IMR-90 (cell line): ENCODE measurements at regions of chr9 and their contacts with region 1.

Region 1: DNA sequence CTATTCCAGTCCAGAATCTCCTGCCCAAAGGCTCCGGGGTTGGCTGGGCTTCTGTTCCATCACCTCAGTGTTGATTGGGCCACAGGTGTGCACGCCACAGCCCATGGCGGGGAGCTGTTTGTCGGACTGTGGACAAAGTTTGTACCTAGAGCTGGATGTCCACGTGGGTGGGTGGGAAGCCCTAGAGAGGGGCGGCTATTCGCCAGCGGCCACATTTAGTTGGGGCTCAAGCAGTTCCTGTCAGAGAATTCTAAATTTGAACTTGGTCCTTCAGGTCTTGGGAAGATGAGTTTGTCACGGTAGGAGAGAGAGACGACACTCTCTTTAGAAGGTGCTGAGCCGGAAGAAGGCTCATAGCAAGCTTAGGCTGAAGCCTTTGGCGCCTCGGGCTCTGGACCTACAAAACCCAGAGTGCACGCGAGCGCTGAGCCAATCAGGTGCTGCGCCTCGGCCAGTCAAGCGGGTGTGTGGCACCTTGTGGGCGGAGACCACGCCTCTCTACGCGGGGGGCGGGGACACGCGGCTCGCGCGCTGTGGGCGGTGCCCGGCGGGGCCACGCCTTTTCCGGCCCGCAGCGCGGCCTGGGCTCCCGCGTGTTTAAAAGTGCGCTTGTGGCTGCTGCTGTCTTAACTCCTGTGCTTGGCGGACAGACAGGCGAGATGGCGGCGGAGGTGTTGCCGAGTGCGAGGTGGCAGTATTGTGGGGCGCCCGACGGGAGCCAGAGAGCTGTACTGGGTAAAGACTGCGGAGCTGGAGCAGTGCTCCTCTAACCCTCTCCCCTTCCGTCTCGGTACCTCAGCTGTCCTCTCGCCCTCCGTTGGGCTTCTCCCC is at the start of gene POLR1E:
- DNase-seq: peak; percentile 89
- ATAC-seq: peak; percentile 91
- H3K4me3 ChIP-seq: peak within 1 kb of the TSS; percentile 77
- H3K27ac ChIP-seq: peak within 1 kb of the TSS; percentile 76
- H3K4me1 ChIP-seq: peaks cover 11% of the 10 kb centered on the region
- H3K27me3 ChIP-seq: peaks cover 4% of the 10 kb centered on the region; the same call in 1 of the 2 replicates
- CTCF ChIP-seq: no peak
- POLR2A ChIP-seq: peak; percentile 95
- RAD21 ChIP-seq: no peak
- total RNA-seq, gene POLR1E: 67.5 and 71.9 TPM in 2 replicates

Region 2: DNA sequence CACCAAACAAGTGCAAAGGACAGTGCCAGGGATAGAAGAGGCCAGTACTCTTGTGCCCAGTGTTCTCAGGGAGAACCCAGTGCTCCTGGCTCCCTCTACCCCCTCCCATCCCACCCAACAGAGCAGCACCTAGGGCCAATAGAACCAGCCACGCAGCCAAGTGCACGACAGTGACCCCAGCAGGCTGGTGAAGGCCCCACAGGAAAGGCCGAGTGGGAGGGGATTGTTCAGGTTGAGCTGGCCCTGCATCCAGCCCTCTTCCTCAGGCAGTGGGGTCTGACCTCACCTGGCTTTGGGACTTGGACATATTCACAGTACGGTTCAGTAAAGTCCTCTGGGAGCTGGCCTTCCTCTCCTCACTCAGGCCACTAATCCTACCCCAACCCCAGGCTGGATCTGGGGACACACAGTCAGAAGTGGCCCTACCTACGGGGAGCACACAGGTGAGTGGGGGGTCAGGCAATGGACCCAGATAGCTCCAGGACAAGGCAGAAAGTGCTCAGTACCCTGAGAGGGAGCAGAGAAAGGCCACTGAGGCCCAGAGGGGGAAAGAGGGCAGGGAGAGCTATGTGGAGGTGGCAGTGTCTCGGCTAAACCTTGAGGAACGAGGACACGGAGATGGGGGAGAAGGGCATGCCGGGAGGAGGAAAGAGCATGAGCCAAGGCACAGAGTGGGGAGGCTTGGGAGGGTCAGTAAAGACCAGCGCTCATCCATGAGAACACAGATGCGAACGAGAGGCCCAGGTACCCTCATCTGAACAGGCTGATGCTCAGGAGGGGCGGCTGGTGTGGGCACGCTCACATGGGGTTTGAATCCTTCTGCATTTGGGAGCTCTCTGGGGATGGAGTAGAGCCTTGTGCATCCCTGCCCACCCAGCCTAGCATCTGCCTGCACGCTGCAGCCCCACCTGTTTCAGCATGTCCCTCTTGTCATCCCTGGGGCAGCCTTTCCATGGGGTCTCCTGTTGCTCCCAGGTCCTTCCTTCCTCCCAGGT is 25.7 kb after region 1 on chr9:
- CTCF ChIA-PET with region 1: no interaction called
- POLR2A ChIA-PET with region 1: no interaction called
- dilution Hi-C with region 1: no loop called
- in situ Hi-C with region 1: no loop called
- intact Hi-C with region 1: no loop called
- DNase-seq: no peak
- ATAC-seq: peak; percentile 50
- H3K4me3 ChIP-seq: no peak overlapping the region
- H3K27ac ChIP-seq: no peak overlapping the region
- H3K4me1 ChIP-seq: no peaks in the 10 kb centered on the region
- H3K27me3 ChIP-seq: no peaks in the 10 kb centered on the region
- CTCF ChIP-seq: 0 out of 2 replicates have a peak, but pooled peaks have one; percentile 1
- POLR2A ChIP-seq: 0 out of 2 replicates have a peak, but pooled peaks have one; percentile 1
- RAD21 ChIP-seq: no peak

Region 3: DNA sequence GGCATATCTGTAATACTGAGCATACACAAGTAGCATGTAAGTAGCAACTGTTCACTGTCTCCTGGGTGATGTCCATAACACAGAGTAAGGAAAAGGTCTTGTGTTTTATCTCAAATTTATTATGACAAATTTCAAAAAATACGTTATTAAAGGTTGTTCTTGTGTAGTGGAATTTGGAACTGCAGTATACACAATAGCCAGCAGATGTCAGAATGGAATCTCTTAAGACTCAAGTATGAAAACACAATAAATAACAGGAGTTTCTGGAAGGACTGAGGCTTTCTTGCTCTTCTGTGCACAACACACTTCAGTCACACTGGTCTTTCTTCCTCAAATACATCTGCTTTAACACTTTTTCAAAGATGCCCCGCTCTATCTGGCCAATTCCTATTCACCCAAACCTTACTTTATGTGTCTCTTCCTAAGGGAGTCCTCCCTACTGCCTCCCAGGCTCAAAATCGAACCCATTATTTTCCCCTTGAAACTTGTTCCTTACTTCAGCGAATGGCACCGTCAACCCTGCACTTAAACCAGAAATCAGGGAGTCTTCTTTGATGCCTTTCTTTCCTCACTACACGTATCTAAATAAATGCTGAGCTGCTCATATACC is 97.0 kb after region 1 on chr9:
- CTCF ChIA-PET with region 1: no interaction called
- POLR2A ChIA-PET with region 1: no interaction called
- dilution Hi-C with region 1: no loop called
- in situ Hi-C with region 1: no loop called
- intact Hi-C with region 1: loop called (anchors 2 kb)
- DNase-seq: peak; percentile 86
- ATAC-seq: peak; percentile 93
- H3K4me3 ChIP-seq: no peak overlapping the region
- H3K27ac ChIP-seq: no peak overlapping the region
- H3K4me1 ChIP-seq: no peaks in the 10 kb centered on the region
- H3K27me3 ChIP-seq: no peaks in the 10 kb centered on the region
- CTCF ChIP-seq: peak; percentile 75
- POLR2A ChIP-seq: no peak
- RAD21 ChIP-seq: peak; percentile 70

Region 4: DNA sequence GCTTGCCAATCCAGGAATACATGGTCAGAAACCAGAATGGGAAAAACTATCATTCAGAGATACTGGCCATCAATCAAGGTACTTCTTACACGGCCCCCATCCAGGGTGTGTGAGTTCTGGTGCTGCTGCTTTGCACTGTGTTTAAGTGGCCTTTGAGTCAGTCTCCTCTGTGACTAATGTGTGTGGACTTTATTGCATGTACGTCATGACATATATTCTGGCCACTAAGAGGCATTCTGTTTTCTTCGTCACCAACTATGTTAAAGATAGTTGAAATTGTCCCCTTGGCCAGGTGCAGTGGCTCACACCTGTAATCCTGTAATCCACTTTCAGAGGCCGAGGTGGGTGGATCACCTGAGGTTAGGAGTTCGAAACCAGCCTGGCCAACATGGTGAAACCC is 290.7 kb after region 1 on chr9:
- CTCF ChIA-PET with region 1: no interaction called
- POLR2A ChIA-PET with region 1: no interaction called
- dilution Hi-C with region 1: no loop called
- in situ Hi-C with region 1: loop called (anchors 10 kb)
- intact Hi-C with region 1: no loop called
- DNase-seq: peak; percentile 80
- ATAC-seq: peak; percentile 76
- H3K4me3 ChIP-seq: no peak overlapping the region
- H3K27ac ChIP-seq: no peak overlapping the region
- H3K4me1 ChIP-seq: peaks cover 6% of the 10 kb centered on the region
- H3K27me3 ChIP-seq: no peaks in the 10 kb centered on the region
- CTCF ChIP-seq: no peak
- POLR2A ChIP-seq: no peak
- RAD21 ChIP-seq: no peak

Region 5: GRCh38 chr9:38026021-38026809 is 540.6 kb after region 1 on chr9:
- CTCF ChIA-PET with region 1: no interaction called
- POLR2A ChIA-PET with region 1: no interaction called
- dilution Hi-C with region 1: no loop called
- in situ Hi-C with region 1: no loop called
- intact Hi-C with region 1: loop called (anchors 2 kb)
- DNase-seq: peak; percentile 98
- ATAC-seq: peak; percentile 77
- H3K4me3 ChIP-seq: no peak overlapping the region
- H3K27ac ChIP-seq: peak overlapping the region; percentile 96
- H3K4me1 ChIP-seq: peaks cover 59% of the 10 kb centered on the region
- H3K27me3 ChIP-seq: no peaks in the 10 kb centered on the region
- CTCF ChIP-seq: no peak
- POLR2A ChIP-seq: no peak; the same call in 1 of the 2 replicates
- RAD21 ChIP-seq: peak; percentile 28

Region 6: DNA sequence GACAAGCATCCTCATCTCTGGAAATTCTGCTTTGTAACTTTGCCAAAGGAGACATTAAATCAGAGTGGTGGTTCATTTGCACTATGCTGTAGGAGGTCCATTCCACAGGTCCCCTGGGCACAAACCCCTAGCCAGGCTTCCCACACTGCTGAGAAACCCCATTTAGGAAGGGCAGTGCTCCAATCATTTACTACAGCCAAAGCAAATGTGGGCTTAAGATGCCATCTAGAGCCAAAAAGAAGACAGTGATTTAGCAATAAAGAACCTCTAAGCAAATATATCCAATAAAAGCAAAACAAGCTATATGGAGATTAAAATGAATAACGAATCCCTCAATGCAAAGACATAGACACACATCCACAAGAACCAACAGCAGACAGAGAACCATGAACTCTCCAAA is 777.9 kb after region 1 on chr9:
- CTCF ChIA-PET with region 1: no interaction called
- POLR2A ChIA-PET with region 1: no interaction called
- dilution Hi-C with region 1: no loop called
- in situ Hi-C with region 1: no loop called
- intact Hi-C with region 1: loop called (anchors 5 kb)
- DNase-seq: peak; percentile 48
- ATAC-seq: no peak
- H3K4me3 ChIP-seq: no peak overlapping the region
- H3K27ac ChIP-seq: no peak overlapping the region
- H3K4me1 ChIP-seq: no peaks in the 10 kb centered on the region
- H3K27me3 ChIP-seq: peaks cover 5% of the 10 kb centered on the region
- CTCF ChIP-seq: peak; percentile 67
- POLR2A ChIP-seq: no peak
- RAD21 ChIP-seq: peak; percentile 80

Region 7: GRCh38 chr9:38408719-38409118 is 923.1 kb after region 1 on chr9:
- CTCF ChIA-PET with region 1: no interaction called
- POLR2A ChIA-PET with region 1: no interaction called
- dilution Hi-C with region 1: no loop called
- in situ Hi-C with region 1: no loop called
- intact Hi-C with region 1: loop called (anchors 10 kb)
- DNase-seq: no peak
- ATAC-seq: no peak
- H3K4me3 ChIP-seq: no peak overlapping the region
- H3K27ac ChIP-seq: no peak overlapping the region
- H3K4me1 ChIP-seq: no peaks in the 10 kb centered on the region
- H3K27me3 ChIP-seq: peaks cover 84% of the 10 kb centered on the region
- CTCF ChIP-seq: no peak
- POLR2A ChIP-seq: no peak
- RAD21 ChIP-seq: no peak